ENCODE measurements at regions of chr12 and their contacts with region 1.

Region 1: GRCh38 chr12:70719672-70720420 is 82.6 kb upstream of the PTPRB start:
- DNase-seq: peak; percentile 83

Region 2: GRCh38 chr12:70590051-70590450 is 129.8 kb before region 1 on chr12:
- intact Hi-C with region 1: loop called in 1 of 2 experiments (anchors 2 kb)
- DNase-seq: peak; percentile 92

Region 3: GRCh38 chr12:70683976-70684375 is 35.9 kb before region 1 on chr12:
- intact Hi-C with region 1: loop called in 1 of 2 experiments (anchors 2 kb)
- DNase-seq: no peak